ENCODE measurements at regions of chr11 and their contacts with region 1.

Region 1: DNA sequence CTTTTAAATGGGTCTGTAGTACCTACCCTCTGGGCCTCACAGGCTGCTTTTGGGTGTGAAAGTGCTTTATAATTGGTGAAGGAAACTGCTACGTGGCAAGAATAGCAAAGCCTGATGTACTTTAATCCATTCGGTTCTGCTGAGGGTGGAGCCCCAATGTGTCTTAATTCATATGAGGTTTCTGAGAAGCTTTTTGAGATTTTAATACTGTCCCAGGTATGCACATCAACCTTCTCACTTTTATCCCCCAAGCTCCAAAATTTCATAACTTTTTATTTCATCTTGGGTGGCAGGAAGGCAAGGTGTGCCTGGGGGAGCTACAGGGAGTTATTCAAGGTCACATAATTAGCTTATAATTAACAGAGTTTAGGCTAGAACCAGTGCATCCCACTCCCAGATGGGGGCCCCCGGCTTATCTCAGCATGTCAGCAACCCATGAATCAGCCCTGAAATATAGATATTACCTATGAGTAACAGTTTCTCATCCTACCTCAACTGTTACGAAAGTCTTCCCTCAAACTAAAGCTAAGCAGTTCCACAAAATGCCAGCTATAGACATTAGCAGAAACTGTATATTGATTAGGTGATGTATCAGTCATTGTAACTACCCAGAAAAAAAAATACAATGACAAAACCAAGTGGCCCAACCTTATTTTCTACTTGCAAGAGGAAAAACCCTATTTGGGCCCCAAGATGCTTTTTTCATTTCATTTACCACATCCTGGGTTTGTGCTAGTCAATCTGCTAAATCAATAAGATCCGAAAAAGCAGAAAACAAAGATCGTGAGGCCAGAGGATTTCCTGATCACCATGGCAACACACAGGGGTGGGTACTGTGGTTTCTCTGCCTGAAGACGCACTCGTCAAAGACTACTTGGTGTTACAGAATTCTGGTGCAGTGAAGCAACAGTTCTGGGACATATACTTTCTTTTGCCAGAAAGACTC is 26.7 kb downstream of the CD44 start:
- DNase-seq: peak; percentile 96
- H3K4me3 Mint-ChIP-seq: peak overlapping the region; percentile 65
- H3K27ac Mint-ChIP-seq: peak overlapping the region; percentile 96
- H3K4me1 Mint-ChIP-seq: peaks cover 100% of the 10 kb centered on the region
- H3K27me3 Mint-ChIP-seq: no peaks in the 10 kb centered on the region

Region 2: DNA sequence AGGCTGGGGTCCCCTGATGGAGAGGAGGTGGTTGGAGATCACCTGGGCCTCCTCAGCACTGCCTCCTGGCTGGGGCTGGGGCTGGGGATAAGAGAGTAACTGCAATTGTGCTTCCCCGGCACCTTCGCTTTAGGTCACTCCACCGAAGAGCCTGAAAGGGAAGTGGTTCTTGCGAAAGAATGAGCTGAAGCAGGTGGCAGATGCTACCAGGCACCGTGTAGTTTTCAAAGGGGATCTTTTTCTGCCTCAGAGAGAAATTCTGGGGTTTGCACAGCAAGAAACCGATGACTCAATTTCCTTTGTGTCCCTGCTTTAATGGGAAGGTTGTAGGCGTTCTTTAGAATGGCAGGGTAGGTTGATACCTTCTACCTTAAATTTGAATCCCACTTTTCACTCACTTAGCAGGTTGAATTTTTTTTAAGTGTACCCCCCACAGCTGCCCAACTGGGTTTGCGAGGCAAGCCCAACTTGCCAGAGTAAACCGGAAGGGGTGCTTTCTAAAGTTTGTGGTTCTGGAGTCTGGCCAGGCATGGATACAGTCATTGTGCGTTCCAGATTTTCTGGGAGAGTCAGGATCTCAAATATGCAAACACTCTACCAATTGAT is 21.5 kb before region 1 on chr11:
- CTCF ChIA-PET with region 1: interaction called, 95 read pairs
- POLR2A ChIA-PET with region 1: interaction called, 3 read pairs
- DNase-seq: peak; percentile 77
- H3K4me3 Mint-ChIP-seq: peak overlapping the region; percentile 50
- H3K27ac Mint-ChIP-seq: peak overlapping the region; percentile 86
- H3K4me1 Mint-ChIP-seq: peaks cover 76% of the 10 kb centered on the region
- H3K27me3 Mint-ChIP-seq: no peaks in the 10 kb centered on the region

Region 3: DNA sequence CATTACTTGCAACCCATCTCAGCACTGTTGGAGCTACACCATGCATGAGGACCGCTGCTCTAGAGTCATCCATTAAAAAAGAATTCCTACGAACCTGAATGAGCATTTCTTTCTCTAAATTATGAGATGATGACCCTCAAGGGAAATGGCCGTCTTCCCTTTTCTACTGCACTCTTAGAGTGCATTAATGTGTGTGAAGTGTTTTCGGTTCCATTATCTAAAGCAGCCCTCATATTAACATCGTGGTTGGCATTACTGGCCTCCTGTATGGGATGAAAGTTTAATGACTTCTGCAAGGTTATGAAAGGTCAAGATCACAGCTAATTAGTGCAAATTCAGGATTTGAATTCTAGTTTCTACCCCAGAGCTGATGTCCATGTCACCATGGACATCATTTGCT is 10.0 kb before region 1 on chr11:
- CTCF ChIA-PET with region 1: interaction called, 95 read pairs
- POLR2A ChIA-PET with region 1: no interaction called
- DNase-seq: no peak
- H3K4me3 Mint-ChIP-seq: no peak overlapping the region
- H3K27ac Mint-ChIP-seq: no peak overlapping the region
- H3K4me1 Mint-ChIP-seq: peaks cover 96% of the 10 kb centered on the region
- H3K27me3 Mint-ChIP-seq: no peaks in the 10 kb centered on the region

Region 4: DNA sequence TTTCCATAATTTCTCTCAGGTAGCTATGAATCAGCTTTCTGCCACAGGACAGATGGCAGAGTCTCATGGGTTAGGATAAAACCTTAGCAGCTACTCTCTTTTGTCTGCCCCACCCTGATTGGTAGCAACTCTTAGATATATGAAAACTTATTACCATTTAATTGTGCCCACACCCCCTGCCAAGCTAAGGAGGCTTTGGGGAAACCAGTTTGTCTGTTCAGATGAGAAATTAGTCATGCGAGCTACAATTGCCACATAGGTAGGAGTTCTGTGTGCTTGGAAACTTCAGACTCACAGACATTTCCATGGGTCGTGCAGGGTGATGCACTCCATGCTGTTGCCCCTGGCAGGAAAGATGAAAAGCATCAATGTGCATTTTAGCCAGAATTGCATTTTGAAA is 13.2 kb after region 1 on chr11:
- CTCF ChIA-PET with region 1: interaction called, 13 read pairs
- POLR2A ChIA-PET with region 1: no interaction called
- DNase-seq: no peak
- H3K4me3 Mint-ChIP-seq: no peak overlapping the region
- H3K27ac Mint-ChIP-seq: peak overlapping the region; percentile 90
- H3K4me1 Mint-ChIP-seq: peaks cover 89% of the 10 kb centered on the region
- H3K27me3 Mint-ChIP-seq: no peaks in the 10 kb centered on the region

Region 5: DNA sequence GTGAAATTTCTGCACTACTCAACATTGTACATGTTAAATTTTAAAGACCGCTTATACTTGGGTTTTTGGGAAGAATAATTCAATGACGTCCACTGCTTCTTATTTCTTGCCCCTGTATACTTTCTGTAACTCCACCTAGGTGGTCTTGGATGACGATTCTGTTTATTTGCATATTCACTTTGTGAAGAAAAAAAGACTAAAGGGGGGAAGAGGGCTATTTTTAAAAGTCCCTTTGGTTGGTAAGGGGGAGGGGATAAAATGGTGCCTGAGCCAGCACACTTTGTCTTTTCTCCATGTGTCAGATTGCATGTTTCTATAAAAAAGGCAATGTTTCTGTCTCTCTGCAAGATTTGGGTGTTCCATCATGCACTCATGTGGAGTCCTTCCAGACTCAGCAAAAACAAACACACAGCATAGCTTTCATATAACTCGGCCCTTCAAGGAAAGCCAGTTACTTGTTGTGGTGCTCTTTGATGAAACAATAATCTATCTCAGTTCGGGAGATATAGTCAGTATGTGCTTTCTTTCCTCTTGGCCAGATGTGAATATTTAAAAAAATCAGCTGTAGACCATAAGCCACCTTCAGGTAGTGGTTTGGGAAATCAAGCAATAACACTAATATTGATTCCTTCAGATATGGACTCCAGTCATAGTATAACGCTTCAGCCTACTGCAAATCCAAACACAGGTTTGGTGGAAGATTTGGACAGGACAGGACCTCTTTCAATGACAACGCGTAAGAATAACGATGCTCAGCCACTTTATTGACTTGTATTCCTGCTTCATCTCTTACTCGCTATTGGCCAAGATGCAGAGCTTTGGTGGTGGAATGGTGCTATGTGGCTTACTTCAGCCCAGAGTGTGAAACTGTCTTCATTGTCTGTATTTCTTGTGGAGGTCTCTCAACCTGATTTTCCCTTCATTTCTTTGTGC is 42.0 kb after region 1 on chr11:
- CTCF ChIA-PET with region 1: no interaction called
- POLR2A ChIA-PET with region 1: no interaction called
- DNase-seq: no peak
- H3K4me3 Mint-ChIP-seq: no peak overlapping the region
- H3K27ac Mint-ChIP-seq: no peak overlapping the region
- H3K4me1 Mint-ChIP-seq: peaks cover 3% of the 10 kb centered on the region
- H3K27me3 Mint-ChIP-seq: no peaks in the 10 kb centered on the region